Thyroid gland (tissue), 4 donors: ENCODE measurements at regions of chr10 and their contacts with region 1.

Region 1: GRCh38 chr10:2927958-2928840 is 139.1 kb upstream of the PFKP start:
- DNase-seq: peak; percentile 78 to 81
- H3K4me3 ChIP-seq: no peak overlapping the region
- H3K27ac ChIP-seq: no peak overlapping the region
- H3K4me1 ChIP-seq: no peaks in the 10 kb centered on the region
- H3K27me3 ChIP-seq: no peaks in the 10 kb centered on the region
- CTCF ChIP-seq: peak; percentile 16 to 91 (median 74)
- POLR2A ChIP-seq: no peak

Region 2: DNA sequence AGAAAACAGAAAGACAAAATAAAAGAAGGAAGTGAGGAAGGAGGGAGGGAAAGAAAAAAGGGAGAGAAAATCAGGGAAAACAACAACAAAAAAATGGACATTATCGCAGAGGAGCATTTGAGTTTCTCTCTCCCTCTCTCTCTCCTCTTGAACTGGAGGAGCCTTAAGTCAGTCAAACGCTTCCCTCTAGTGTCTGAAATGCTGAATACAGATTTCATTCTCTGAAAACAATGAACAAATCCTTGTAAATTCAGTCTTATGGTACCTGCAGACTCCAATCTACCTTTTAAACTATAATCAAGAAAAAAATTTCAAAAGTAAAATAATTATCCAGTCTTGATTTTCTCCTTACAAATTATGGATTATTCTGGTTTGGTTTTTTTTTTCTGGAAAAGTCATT is 49.9 kb after region 1 on chr10:
- intact Hi-C with region 1: loop called (anchors 5 kb)
- DNase-seq: no peak
- H3K4me3 ChIP-seq: no peak overlapping the region
- H3K27ac ChIP-seq: no peak overlapping the region
- H3K4me1 ChIP-seq: peaks cover 0 to 16% of the 10 kb centered on the region in 2 donors
- H3K27me3 ChIP-seq: no peaks in the 10 kb centered on the region
- CTCF ChIP-seq: peak in 5 of 6 experiments; percentile 21 to 93 (median 59)
- POLR2A ChIP-seq: no peak

Region 3: GRCh38 chr10:3043512-3044368 is 115.5 kb after region 1 on chr10:
- intact Hi-C with region 1: loop called (anchors 5 kb)
- DNase-seq: peak; percentile 77 to 80
- H3K4me3 ChIP-seq: no peak overlapping the region
- H3K27ac ChIP-seq: peak overlapping the region; percentile 34 to 83 (median 54)
- H3K4me1 ChIP-seq: peaks cover 26 to 41% of the 10 kb centered on the region in 2 donors
- H3K27me3 ChIP-seq: no peaks in the 10 kb centered on the region
- CTCF ChIP-seq: peak; percentile 36 to 96 (median 82)
- POLR2A ChIP-seq: no peak